RWPE1 (cell line): ENCODE measurements at regions of chr9 and their contacts with region 1.

Region 1: DNA sequence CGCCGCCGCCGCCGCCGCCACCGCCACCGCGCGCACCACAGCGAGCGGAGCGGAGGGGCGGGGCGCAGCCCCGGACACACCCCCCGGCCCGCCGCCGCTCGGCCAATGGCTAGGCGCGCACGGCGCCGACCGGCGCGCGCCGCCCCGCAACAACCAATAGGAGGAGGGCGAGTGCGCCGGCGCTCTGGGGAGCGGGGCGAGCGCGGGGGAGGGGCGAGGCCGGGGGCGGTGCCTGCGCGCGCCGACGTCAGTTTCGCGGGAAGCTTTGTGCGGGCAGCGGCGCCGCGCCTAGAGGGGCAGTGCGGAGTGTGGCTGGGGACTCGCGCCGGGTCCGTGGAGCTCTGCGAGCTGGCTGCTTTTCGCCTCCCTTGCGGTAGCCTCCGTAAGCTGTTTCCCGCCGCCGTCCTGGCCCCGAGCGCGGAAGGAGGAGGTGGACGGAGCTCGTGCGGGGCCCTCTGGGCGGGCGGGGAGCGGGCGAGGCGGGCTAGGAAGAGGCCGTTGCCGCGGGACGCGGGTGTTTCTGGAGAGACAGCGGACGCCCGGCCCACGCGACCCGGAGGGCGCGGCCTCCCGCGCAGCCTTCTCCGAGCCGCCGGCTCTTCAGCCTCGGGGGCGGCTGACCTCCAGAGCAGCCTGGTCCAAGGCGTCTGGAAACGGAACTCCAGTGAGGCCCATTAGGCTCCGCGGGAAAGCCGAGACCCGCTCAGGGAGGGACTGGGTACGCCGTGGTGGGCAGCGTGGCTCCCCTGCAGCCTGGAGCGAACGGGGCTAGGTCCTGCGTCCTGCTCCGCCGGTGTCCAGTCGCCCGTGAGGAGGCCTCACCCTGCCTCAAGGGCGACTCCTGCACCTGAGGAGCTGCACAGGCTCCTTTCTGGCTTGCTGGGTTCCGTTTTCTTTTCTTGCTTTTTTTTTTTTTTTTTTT is at the start of gene ZMYND19:
- DNase-seq: peak; percentile 100
- H3K27ac ChIP-seq: peak within 1 kb of the TSS; percentile 81
- CTCF ChIP-seq: peak; percentile 31

Region 2: GRCh38 chr9:137516144-137516917 is 74.4 kb before region 1 on chr9:
- CTCF ChIA-PET with region 1: no interaction called
- POLR2A ChIA-PET with region 1: no interaction called
- DNase-seq: no peak
- H3K27ac ChIP-seq: peak overlapping the region; percentile 5; the same call in 1 of the 2 replicates
- CTCF ChIP-seq: no peak

Region 3: DNA sequence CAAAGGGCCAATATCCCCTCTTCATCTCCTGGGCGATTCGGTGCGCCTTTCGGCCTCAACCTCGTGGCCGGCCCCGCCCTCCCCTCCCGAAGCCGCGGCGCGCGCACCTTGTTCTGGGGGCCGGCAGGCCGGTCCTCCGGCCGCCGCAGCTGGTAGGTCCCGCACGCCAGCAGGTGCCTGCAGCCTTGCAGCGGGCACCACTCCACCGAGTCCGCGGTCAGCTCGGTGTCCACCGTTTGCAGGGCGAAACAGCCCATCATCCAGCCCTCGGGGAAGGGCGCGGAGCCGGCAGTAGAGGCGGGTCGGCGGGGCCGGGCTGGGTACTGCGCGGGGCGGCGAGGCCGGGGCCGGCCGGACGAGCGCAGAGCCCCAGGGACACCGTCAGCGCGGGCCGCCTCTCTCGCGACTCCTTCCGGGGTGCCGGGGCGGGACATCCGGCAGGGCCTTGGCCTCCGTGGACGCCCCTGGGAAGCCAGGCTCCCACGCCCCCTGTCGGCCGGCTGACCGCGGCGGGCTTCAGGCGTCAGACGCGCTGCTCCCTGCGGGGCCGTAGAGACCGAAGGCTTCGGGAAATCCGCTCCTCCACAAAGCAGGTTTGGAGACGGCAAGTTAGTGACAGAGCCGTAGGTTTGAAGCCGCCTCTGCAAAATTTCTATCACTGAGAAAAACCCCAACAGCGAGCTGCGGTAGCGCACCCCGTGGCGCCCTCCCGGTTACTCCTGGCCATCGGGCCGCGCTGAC is 12.0 kb before region 1 on chr9 and contains the start of gene DPH7:
- CTCF ChIA-PET with region 1: interaction called, 48 read pairs
- POLR2A ChIA-PET with region 1: interaction called, 10 read pairs
- DNase-seq: peak; percentile 98
- H3K27ac ChIP-seq: peak within 1 kb of the TSS; percentile 85
- CTCF ChIP-seq: peak; percentile 100

Region 4: DNA sequence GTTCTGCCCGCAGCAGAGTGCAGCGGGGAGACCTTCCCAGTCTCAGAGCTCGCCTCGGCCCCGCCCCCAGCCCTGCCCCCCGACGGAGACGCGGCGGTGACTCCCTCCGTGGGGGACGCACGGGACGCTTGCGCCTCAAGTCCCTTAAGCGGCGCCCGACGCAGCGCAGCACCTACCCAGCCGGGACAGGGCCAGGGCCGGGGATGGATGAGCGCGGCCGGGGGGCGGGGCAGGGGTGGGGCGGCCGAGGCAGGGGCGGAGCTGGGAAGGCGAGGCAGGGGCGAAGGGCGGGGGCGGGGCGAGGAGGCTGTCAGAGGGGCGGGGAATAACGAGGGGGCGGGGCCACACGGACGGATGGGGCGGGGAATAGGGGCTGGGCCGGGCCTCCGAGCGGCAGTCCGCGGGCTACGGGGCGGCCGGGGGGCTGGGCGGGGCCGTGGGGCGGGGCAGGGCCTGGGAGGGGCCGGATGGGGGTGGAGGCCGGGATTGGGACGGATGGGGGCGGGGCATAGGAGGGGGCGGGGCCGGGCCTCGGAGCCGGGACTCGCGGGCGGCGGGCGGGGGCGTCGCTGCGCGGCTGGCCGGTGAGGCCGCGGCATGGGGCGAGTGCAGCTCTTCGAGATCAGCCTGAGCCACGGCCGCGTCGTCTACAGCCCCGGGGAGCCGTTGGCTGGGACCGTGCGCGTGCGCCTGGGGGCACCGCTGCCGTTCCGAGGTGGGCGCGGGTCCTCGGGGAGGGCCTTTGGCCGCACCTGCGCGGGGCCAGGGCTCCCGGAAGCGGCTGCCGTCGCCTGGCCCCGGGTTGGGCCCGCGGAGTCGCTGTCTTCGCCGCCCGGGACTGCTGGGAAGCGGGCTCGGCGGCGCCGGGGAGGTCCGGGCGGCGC is 14.6 kb after region 1 on chr9 and contains the start of gene ARRDC1:
- CTCF ChIA-PET with region 1: interaction called, 8 read pairs
- POLR2A ChIA-PET with region 1: interaction called, 13 read pairs
- DNase-seq: peak; percentile 98
- H3K27ac ChIP-seq: peak within 1 kb of the TSS; percentile 100
- CTCF ChIP-seq: no peak

Region 5: GRCh38 chr9:137611623-137612463 is 21.1 kb after region 1 on chr9:
- CTCF ChIA-PET with region 1: interaction called, 8 read pairs
- POLR2A ChIA-PET with region 1: interaction called, 14 read pairs
- DNase-seq: peak; percentile 98
- H3K27ac ChIP-seq: peak overlapping the region; percentile 100
- CTCF ChIP-seq: no peak